Adrenal gland (tissue), 19 donors: ENCODE measurements at regions of chr18 and their contacts with region 1.

Region 1: DNA sequence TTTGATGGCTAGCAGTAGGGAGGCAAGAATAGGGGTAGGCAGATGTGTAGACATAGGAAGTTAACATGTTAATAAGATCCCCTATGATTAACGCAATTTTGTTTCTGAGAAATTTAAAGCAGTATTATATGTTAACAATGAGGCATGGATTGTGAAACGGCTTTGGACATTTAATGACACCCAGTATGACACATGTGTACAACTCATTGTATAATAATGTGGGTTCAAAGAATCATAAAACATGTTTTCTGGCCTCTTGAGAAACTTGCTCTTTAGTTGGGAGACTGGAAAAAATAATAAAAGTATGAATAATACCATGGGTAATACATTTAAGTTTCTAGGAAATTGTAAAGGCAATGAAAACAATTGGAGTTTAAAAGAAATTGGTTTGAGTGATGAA is 332.1 kb upstream of the CDH20 start:
- DNase-seq: no peak
- H3K4me3 ChIP-seq: no peak overlapping the region
- H3K27ac ChIP-seq: no peak overlapping the region
- H3K4me1 ChIP-seq: no peaks in the 10 kb centered on the region
- H3K27me3 ChIP-seq: no peaks in the 10 kb centered on the region
- CTCF ChIP-seq: no peak
- POLR2A ChIP-seq: no peak

Region 2: DNA sequence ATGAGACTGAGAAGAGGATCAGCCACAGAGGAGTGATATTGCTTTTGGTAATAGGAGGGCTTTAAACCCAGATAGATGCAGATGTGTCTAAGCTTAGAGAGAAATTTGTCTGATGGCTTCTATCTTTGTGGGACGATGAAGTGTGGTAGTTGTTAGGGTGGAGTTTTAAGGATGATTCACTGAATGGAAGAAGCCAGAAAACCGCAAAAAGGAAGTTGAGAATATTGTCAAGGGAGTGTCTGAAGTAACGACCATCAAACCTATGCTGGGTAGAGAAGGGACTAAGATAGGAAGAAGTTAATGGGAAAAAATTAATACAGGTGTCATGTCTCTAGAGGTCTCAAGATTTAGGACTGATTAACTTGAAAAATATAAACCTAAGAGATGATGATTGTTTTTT is 432.9 kb before region 1 on chr18:
- intact Hi-C with region 1: no loop called
- DNase-seq: no peak
- H3K4me3 ChIP-seq: no peak overlapping the region
- H3K27ac ChIP-seq: no peak overlapping the region
- H3K4me1 ChIP-seq: no peaks in the 10 kb centered on the region
- H3K27me3 ChIP-seq: no peaks in the 10 kb centered on the region
- CTCF ChIP-seq: no peak
- POLR2A ChIP-seq: no peak

Region 3: GRCh38 chr18:60943297-60943696 is 57.8 kb before region 1 on chr18:
- intact Hi-C with region 1: loop called in 1 of 2 experiments (anchors 10 kb)
- DNase-seq: no peak
- H3K4me3 ChIP-seq: no peak overlapping the region
- H3K27ac ChIP-seq: no peak overlapping the region
- H3K4me1 ChIP-seq: no peaks in the 10 kb centered on the region
- H3K27me3 ChIP-seq: no peaks in the 10 kb centered on the region
- CTCF ChIP-seq: no peak
- POLR2A ChIP-seq: no peak

Region 4: GRCh38 chr18:61248589-61248988 is 247.5 kb after region 1 on chr18:
- intact Hi-C with region 1: no loop called
- DNase-seq: no peak
- H3K4me3 ChIP-seq: no peak overlapping the region
- H3K27ac ChIP-seq: no peak overlapping the region
- H3K4me1 ChIP-seq: no peaks in the 10 kb centered on the region
- H3K27me3 ChIP-seq: no peaks in the 10 kb centered on the region
- CTCF ChIP-seq: no peak
- POLR2A ChIP-seq: no peak